Uterus (tissue), 4 donors: ENCODE measurements at regions of chr4 and their contacts with region 1.

Region 1: DNA sequence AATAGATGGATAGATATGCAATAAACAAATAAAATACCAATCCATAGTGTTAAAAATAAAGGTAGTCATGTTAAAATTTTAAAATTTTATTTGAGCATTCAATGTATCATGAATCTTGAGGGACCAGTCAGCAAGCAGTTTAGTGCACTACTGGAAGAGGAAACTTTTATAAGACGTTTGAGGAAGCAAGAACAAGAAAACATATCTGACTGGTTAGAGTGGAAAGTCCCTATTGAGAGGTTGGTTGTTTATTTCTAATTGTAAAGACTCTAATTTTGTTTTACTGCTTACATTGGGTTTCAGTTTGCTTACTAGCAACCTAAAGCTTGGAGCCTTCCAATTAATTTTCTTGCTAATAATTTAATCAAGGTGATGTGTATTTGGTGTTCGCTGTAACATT is 786.2 kb downstream of the RAB28 start:
- DNase-seq: no peak
- H3K4me3 ChIP-seq: no peak overlapping the region
- H3K27ac ChIP-seq: no peak overlapping the region
- H3K4me1 ChIP-seq: no peaks in the 10 kb centered on the region
- H3K27me3 ChIP-seq: no peaks in the 10 kb centered on the region
- CTCF ChIP-seq: no peak
- POLR2A ChIP-seq: no peak

Region 2: DNA sequence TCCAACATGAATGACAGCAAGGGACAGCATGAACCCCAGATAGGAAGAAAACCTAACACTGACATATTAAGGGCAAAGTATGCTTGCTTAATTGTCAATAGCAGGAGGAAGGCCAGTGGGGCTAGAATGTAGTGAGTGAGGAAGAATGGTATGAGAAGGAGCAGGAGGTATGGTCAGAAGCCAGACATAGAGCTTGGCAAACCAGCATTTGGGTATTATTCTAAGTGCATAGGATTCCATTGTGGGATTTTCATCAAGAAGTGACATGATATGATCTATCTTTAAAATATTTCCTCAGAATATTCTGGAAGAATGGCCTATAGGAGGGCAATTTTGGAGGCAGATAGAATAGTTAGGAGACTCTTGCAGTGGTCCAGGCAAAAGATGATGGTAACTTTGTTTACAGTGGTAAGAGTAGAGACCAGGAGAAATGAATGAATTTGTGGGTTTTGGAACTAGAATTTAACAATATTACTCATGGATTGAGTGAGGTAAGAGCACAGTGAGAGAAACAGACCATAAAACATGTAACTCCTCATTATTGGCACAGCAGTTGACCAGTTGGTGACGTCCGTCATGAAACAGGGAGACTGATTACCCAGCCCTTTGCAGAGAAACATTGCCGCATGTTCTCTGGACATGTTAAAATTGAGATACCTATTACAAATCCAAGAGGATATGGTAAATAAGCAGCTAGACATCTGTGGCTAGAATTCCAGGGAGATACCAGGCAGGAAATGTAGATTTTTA is 1022.7 kb before region 1 on chr4:
- intact Hi-C with region 1: loop called (anchors 5 kb)
- DNase-seq: no peak
- H3K4me3 ChIP-seq: no peak overlapping the region
- H3K27ac ChIP-seq: no peak overlapping the region
- H3K4me1 ChIP-seq: no peaks in the 10 kb centered on the region
- H3K27me3 ChIP-seq: no peaks in the 10 kb centered on the region
- CTCF ChIP-seq: no peak
- POLR2A ChIP-seq: no peak

Region 3: DNA sequence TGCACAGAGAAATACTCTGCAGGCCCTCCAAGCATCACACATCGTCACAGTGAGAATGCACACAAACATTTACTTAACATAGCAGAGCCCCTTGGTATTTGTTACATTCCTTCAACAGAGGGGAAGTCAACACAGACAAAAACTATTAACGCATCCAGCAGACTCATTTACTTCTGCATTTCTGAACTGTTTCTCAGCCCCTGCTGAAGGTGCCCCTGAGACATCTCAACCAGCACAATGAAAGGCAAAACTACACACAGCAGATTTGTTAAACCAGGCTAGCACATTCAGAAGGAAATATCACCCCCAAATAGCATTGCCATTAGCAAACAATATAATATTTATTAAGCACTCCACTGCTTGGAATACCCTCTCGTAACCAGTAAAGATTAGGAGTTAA is 419.2 kb after region 1 on chr4:
- intact Hi-C with region 1: no loop called
- DNase-seq: no peak
- H3K4me3 ChIP-seq: no peak overlapping the region
- H3K27ac ChIP-seq: no peak overlapping the region
- H3K4me1 ChIP-seq: no peaks in the 10 kb centered on the region
- H3K27me3 ChIP-seq: no peaks in the 10 kb centered on the region
- CTCF ChIP-seq: no peak
- POLR2A ChIP-seq: no peak